GM13976 (cell line): ENCODE measurements at regions of chr13 and their contacts with region 1.

Region 1: DNA sequence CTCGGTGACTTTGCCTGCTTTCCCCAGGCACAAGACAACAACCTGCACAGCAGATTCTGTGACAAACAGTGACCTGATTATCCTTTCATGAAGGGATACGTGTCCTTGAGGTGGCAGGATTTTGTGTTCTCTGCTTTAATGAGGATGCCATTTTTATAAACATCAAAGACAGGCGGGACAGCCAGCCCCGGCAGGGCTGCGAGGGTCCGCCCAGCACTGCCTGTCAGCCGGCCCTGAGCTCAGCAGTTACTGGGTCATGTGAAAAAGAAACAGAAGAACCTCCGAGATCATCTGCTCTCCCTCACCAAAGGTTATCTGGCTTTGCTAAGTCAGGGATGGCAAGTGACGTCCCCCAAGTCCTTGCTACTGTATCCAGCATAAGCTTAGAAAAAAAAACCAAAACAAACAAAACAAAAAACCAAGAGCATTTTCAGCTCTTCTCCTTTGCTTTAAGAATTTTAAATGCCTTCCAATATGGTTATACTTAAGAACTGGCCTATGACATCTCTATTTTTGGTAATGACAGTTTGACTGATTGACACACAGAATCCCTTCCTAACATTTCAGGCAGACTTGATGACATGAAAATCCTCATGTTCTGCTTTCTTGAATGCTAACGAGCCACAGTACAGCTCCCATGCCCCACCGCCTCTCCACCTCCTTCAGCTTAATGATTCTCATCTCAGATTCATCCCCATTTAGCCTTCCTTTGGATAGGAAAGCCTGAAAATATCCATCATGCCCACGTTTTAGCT is 666.6 kb upstream of the ARGLU1 start:
- DNase-seq: no peak
- CTCF ChIP-seq: no peak

Region 2: DNA sequence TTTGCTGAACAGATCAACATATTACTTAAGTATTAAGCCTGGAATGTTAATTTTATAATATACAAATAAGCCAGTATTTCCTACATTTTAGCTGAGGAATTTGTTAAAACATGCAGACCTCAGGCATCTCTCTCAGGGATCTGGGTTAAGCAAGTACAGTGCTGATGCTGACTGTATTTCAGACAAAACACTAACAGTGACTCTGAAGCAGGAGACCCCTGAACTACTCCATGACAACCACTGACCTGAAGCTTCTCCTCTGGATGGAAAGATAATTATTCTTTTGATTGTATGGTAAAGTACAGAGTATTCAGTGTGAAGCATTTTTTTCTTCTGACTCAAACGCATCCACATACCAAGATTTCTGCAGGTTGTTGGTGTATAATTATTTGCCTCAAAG is 300.1 kb after region 1 on chr13:
- in situ Hi-C with region 1: no loop called
- DNase-seq: no peak
- CTCF ChIP-seq: no peak

Region 3: DNA sequence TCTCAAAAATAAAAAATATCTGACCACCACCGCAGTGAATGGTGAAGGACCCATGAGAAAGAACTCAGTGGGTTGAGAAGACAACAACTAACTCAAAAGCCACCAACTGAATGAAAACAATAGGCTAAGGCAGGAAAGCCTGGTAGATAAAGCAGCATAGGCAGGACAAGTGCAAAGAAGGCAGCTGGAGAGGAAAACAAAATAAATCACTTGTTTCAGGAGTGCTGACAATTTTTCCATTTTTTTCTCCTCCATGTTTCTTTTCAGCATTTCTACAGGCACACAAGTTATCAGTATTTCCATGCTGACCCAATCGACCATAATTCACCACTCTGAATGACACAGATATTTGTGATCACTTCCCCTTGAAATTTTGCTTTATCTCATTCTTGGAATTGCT is 383.0 kb after region 1 on chr13:
- in situ Hi-C with region 1: no loop called
- DNase-seq: no peak
- CTCF ChIP-seq: no peak

Region 4: GRCh38 chr13:107650081-107650701 is 415.7 kb after region 1 on chr13:
- in situ Hi-C with region 1: loop called (anchors 25 kb)
- DNase-seq: peak; percentile 12
- CTCF ChIP-seq: peak; percentile 90